HepG2 (cell line): ENCODE measurements at regions of chr19 and their contacts with region 1.

Region 1: GRCh38 chr19:52601025-52601973 is 31.2 kb downstream of the ZNF701 start:
- DNase-seq: peak; percentile 74
- ATAC-seq: peak; percentile 95
- H3K4me3 ChIP-seq: peak overlapping the region; percentile 41 to 73 (median 71); a peak in 5 of 6 replicates
- H3K27ac ChIP-seq: peak overlapping the region; percentile 82
- H3K4me1 ChIP-seq: peaks cover 17% of the 10 kb centered on the region
- H3K27me3 ChIP-seq: no peaks in the 10 kb centered on the region
- CTCF ChIP-seq: no peak; the same call in 1 of the 2 replicates
- EP300 ChIP-seq: no peak
- POLR2A ChIP-seq: peak; percentile 64 to 68
- RAD21 ChIP-seq: no peak

Region 2: DNA sequence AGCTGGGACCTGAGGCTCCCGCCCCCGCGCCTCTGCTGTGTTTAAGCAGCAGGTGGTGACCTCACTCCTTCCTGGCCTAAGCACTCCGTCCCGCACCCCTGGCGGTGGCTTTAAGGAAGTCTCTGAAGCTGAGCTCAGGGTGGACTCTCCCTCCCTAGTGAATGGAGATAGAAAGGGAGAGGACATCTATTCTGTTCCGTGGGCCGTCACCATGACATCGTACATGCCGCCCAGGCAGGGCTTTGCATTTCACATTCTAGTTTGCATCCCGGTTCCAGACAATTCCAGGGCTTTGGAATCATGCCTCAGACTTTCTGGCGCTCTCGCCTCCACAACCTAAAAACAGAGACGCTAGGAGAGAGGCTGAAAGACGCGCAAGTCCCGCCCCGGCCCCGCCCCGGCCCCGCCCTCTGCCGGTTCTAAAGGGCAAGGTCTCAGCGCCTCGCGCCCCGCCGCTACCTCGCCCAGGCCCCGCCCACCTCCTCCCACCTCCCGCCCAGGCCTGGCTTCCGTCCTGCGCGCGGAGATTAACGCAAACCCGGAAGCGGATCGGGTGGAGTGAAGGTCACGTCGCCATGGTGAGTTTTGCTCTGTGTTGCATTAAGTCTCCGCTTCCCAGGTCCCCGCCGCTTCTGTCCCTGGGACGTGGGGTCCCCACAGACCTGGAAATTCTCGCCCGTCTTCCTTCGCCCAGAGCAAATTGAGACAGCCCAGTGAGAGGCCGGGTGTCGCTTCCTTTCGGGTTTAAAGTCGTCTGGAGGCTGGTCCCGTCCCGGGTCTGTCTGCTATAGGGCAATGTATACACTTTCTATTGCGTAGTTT is 74.0 kb before region 1 on chr19 and contains the start of gene ZNF808:
- CTCF ChIA-PET with region 1: no interaction called
- POLR2A ChIA-PET with region 1: interaction called, 5 read pairs
- in situ Hi-C with region 1: no loop called
- intact Hi-C with region 1: loop called (anchors 1 kb)
- DNase-seq: peak; percentile 85
- ATAC-seq: peak; percentile 93
- H3K4me3 ChIP-seq: peak within 1 kb of the TSS; percentile 84 to 97 (median 93)
- H3K27ac ChIP-seq: peak within 1 kb of the TSS; percentile 84
- H3K4me1 ChIP-seq: peaks cover 10% of the 10 kb centered on the region
- H3K27me3 ChIP-seq: no peaks in the 10 kb centered on the region; a peak in 1 of 5 replicates
- CTCF ChIP-seq: peak; percentile 60
- EP300 ChIP-seq: no peak
- POLR2A ChIP-seq: peak; percentile 65 to 76
- RAD21 ChIP-seq: 0 out of 2 replicates have a peak, but pooled peaks have one; percentile 12
- total RNA-seq, gene ZNF808: 7.4 and 17.5 TPM in 2 replicates

Region 3: DNA sequence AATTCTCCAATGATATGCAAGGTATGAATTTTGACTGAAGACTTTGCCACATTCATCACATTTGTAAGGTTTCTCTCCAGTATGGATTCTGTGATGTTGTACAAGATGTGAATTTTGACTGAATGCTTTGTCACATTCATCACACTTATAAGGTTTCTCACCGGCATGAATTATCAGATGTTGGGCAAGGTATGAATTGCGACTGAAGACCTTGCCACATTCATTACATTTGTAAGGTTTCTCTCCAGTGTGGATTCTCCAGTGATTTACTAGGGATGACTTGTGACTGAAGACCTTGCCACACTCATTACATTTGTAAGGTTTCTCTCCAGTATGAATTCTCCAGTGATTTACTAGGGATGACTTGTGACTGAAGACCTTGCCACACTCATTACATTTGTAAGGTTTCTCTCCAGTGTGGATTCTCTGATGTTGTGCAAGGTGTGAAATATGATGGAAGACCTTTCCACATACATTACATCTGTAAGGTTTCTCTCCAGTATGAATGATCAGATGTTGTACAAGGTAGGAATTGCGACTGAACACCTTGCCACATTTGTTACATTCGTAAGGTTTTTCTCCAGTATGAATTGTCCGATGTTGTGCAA is 12.1 kb after region 1 on chr19:
- CTCF ChIA-PET with region 1: no interaction called
- POLR2A ChIA-PET with region 1: no interaction called
- in situ Hi-C with region 1: no loop called
- intact Hi-C with region 1: no loop called
- DNase-seq: no peak
- ATAC-seq: no peak
- H3K4me3 ChIP-seq: no peak overlapping the region
- H3K27ac ChIP-seq: no peak overlapping the region
- H3K4me1 ChIP-seq: no peaks in the 10 kb centered on the region
- H3K27me3 ChIP-seq: no peaks in the 10 kb centered on the region
- CTCF ChIP-seq: no peak
- EP300 ChIP-seq: no peak
- POLR2A ChIP-seq: no peak
- RAD21 ChIP-seq: no peak

Region 4: DNA sequence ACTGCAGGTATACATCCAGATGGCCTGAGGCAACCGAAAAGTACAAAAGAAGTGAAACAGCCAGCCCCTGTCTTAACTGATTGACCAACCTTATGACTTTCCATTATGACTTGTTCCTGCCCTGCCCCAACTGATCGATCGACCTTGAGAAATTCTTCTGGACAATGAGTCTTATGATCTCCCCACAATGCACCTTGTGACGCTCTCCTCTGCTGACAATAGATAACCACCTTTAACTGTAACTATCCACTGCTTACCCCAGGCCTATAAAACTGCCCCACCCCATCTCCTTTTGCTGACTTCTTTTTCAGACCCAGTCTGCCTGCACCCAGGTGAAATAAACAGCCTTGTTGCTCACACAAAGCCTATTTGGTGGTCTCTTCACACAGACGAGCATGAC is 25.6 kb after region 1 on chr19:
- CTCF ChIA-PET with region 1: no interaction called
- POLR2A ChIA-PET with region 1: no interaction called
- in situ Hi-C with region 1: no loop called
- intact Hi-C with region 1: loop called (anchors 2 kb)
- DNase-seq: no peak
- ATAC-seq: no peak
- H3K4me3 ChIP-seq: no peak overlapping the region
- H3K27ac ChIP-seq: no peak overlapping the region
- H3K4me1 ChIP-seq: no peaks in the 10 kb centered on the region
- H3K27me3 ChIP-seq: no peaks in the 10 kb centered on the region
- CTCF ChIP-seq: no peak
- EP300 ChIP-seq: no peak
- POLR2A ChIP-seq: no peak
- RAD21 ChIP-seq: no peak